BJ (cell line): ENCODE measurements at regions of chr6 and their contacts with region 1.

Region 1: DNA sequence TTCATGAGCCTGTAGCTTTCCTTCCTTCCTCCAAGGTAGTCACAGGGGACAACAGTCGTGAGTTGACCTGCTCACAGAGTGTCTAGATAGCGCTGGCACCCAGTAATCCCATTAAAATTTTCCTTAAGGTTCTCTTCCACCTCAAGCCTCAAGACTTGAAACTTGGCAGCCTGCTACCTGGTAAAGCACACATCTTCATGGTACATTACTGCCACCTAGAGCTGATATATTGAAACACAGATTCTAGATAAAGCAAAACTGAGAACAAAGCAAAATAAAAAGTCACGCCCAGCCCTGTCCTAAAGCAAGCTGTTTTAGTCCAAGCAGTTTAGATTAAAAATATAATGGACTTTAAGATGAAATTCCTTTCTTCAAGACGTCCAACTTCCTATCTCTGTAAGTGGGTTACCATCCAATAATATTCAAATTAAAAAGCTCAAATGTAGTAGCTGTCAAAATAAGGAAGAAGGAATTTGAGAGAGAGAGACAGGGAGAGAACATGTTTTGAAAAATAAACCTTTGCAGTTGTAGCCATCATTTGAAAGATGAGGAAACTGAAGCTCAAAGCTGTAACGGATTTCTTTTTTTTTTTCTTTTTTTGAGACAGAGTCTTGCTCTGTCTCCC is 50.7 kb upstream of the CD83 start:
- DNase-seq: peak; percentile 16
- H3K4me3 ChIP-seq: no peak overlapping the region
- H3K27me3 ChIP-seq: peaks cover 3% of the 10 kb centered on the region; the same call in 1 of the 2 replicates
- CTCF ChIP-seq: peak; percentile 59

Region 2: GRCh38 chr6:13903364-13903763 is 163.5 kb before region 1 on chr6:
- CTCF ChIA-PET with region 1: interaction called, 87 read pairs
- POLR2A ChIA-PET with region 1: no interaction called
- DNase-seq: no peak
- H3K4me3 ChIP-seq: no peak overlapping the region
- H3K27me3 ChIP-seq: peaks cover 2% of the 10 kb centered on the region
- CTCF ChIP-seq: no peak

Region 3: GRCh38 chr6:13914351-13914750 is 152.5 kb before region 1 on chr6:
- CTCF ChIA-PET with region 1: interaction called, 87 read pairs
- POLR2A ChIA-PET with region 1: no interaction called
- DNase-seq: no peak
- H3K4me3 ChIP-seq: no peak overlapping the region
- H3K27me3 ChIP-seq: peaks cover 1% of the 10 kb centered on the region; the same call in 1 of the 2 replicates
- CTCF ChIP-seq: no peak

Region 4: DNA sequence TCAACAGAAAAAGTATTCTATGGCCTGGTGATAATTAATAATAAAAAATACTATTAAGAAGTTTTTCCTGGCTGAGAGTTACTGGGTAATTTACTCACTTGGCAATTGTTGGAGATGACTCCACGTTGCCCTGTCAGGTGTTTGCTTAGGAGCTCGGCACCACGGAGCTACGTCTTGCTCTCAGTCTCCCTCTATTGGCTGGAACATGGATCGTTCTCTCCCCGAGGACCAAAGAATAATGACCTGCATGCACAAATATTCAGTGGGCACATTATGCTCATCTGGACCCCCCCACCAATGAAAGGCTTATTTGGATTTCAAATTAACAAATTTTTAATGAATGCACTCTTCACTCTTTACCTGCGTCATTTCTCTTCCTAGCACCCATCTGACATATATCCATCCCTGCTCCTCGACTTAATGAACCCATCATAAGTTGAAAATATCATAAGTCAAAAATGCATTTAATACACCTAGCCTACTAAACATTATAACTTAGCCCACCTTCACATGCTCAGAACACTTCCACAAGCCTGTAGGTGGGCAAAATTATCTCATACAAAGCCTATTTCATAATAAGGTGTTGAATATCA is 20.3 kb before region 1 on chr6:
- CTCF ChIA-PET with region 1: interaction called, 32 read pairs
- POLR2A ChIA-PET with region 1: no interaction called
- DNase-seq: no peak
- H3K4me3 ChIP-seq: no peak overlapping the region
- H3K27me3 ChIP-seq: peaks cover 6% of the 10 kb centered on the region
- CTCF ChIP-seq: peak; percentile 79

Region 5: DNA sequence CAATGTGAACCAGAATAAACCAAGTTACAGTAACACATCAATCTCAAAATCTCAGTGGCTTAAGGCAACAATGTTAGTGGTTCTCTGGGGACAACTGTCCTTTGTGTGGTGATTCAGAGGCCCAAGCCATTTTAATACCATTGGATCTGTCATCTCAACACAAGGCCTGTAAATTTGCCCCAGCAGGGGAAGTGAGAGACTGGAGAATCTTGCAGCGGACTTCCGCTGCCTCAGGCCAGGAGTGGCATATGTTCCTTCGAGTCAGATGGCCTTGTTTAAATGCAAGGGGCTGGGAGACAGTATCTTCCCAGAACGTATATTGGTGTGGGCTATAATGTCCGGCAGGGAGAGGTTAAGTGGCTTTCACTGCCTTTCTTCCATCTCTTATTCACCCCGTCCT is 176.7 kb after region 1 on chr6:
- CTCF ChIA-PET with region 1: no interaction called
- POLR2A ChIA-PET with region 1: no interaction called
- DNase-seq: no peak
- H3K4me3 ChIP-seq: no peak overlapping the region
- H3K27me3 ChIP-seq: no peaks in the 10 kb centered on the region
- CTCF ChIP-seq: no peak

Region 6: GRCh38 chr6:14510038-14510437 is 443.1 kb after region 1 on chr6:
- CTCF ChIA-PET with region 1: no interaction called
- POLR2A ChIA-PET with region 1: no interaction called
- DNase-seq: no peak
- H3K4me3 ChIP-seq: no peak overlapping the region
- H3K27me3 ChIP-seq: peaks cover 4% of the 10 kb centered on the region
- CTCF ChIP-seq: no peak